ENCODE measurements at regions of chr10 and their contacts with region 1.

Region 1: GRCh38 chr10:7787857-7788638 is at the starts of genes ATP5F1C and KIN:
- DNase-seq: peak; percentile 96 to 97 (median 97)
- H3K4me3 ChIP-seq: peak within 1 kb of the TSS; percentile 74 to 100 (median 96)
- H3K27ac ChIP-seq: peak within 1 kb of the TSS; percentile 79 to 92
- H3K4me1 ChIP-seq: peaks cover 14 to 36% (median 30%) of the 10 kb centered on the region in 4 experiments
- H3K27me3 ChIP-seq: no peaks in the 10 kb centered on the region

Region 2: GRCh38 chr10:7818295-7819122 is 30.5 kb after region 1 on chr10 and contains the start of gene TAF3:
- CTCF ChIA-PET with region 1: interaction called, 24 read pairs
- POLR2A ChIA-PET with region 1: interaction called, 17 read pairs
- DNase-seq: peak; percentile 85 to 94 (median 94)
- H3K4me3 ChIP-seq: peak within 1 kb of the TSS; percentile 91 to 100 (median 96)
- H3K27ac ChIP-seq: peak within 1 kb of the TSS in 1 of 2 experiments; percentile 74
- H3K4me1 ChIP-seq: peaks cover 5 to 26% (median 15%) of the 10 kb centered on the region in 4 experiments
- H3K27me3 ChIP-seq: no peaks in the 10 kb centered on the region